Activated CD8-positive, alpha-beta memory T cell treated with anti-CD3 and anti-CD28 coated beads, Interleukin-2, amount 10 ng/mL, durations not matched to agents 7 days and 5 days (primary cell): ENCODE measurements at regions of chr16 and their contacts with region 1.

Region 1: GRCh38 chr16:10954903-10955302 is 10.5 kb downstream of the CLEC16A start:
- DNase-seq: no peak
- ATAC-seq: no peak
- H3K4me3 Mint-ChIP-seq: no peak overlapping the region
- H3K27ac Mint-ChIP-seq: peak overlapping the region; percentile 22
- H3K4me1 Mint-ChIP-seq: peaks cover 66% of the 10 kb centered on the region
- H3K27me3 Mint-ChIP-seq: no peaks in the 10 kb centered on the region

Region 2: DNA sequence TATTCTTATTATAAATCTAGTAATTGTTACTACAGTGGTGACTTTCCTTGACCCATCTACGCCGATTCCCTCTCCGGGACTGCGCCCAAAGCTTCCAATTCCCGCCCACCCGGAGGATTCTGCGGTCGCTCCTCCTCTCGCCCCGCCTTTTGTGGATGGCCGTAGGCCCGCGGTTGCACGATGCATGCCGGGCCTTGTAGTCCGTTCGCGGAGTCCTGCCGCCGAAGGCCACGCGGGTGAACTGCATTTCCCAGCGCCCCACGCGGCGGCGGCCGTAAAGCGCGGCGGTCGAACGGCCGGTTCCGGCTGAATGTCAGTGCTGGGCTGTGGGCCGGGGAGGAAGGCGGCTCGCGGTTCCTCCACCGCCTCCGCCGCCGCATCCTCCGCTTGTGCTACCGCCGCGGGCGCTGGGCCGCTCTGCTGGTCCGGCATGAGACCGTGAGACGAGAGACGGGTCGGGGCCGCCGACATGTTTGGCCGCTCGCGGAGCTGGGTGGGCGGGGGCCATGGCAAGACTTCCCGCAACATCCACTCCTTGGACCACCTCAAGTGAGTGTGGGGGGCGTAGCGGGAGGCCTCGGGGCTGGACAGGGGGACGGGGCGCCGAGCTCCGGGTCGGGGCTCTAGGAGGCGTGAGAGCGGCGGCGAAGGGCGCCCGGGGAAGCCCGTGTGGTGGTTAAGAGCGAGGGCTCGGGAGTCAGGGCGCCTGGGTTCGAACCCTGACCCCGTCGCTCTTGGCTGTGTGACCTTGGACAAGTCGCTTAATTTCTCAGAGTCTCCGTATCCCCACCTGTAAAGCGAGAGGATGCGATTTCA is 10.4 kb before region 1 on chr16 and contains the start of gene CLEC16A:
- CTCF ChIA-PET with region 1: interaction called, 16 read pairs
- DNase-seq: peak; percentile 98
- ATAC-seq: peak; percentile 72
- H3K4me3 Mint-ChIP-seq: peak within 1 kb of the TSS; percentile 90
- H3K27ac Mint-ChIP-seq: peak within 1 kb of the TSS; percentile 83
- H3K4me1 Mint-ChIP-seq: peaks cover 60% of the 10 kb centered on the region
- H3K27me3 Mint-ChIP-seq: no peaks in the 10 kb centered on the region
- total RNA-seq, gene CLEC16A: 36.5 to 55.9 TPM

Region 3: GRCh38 chr16:10981697-10982216 is 26.9 kb after region 1 on chr16:
- CTCF ChIA-PET with region 1: interaction called, 12 read pairs
- DNase-seq: peak; percentile 87
- ATAC-seq: peak; percentile 89
- H3K4me3 Mint-ChIP-seq: peak overlapping the region; percentile 58
- H3K27ac Mint-ChIP-seq: peak overlapping the region; percentile 81
- H3K4me1 Mint-ChIP-seq: peaks cover 85% of the 10 kb centered on the region
- H3K27me3 Mint-ChIP-seq: no peaks in the 10 kb centered on the region